Psoas muscle (tissue), 8 donors: ENCODE measurements at regions of chr11 and their contacts with region 1.

Region 1: DNA sequence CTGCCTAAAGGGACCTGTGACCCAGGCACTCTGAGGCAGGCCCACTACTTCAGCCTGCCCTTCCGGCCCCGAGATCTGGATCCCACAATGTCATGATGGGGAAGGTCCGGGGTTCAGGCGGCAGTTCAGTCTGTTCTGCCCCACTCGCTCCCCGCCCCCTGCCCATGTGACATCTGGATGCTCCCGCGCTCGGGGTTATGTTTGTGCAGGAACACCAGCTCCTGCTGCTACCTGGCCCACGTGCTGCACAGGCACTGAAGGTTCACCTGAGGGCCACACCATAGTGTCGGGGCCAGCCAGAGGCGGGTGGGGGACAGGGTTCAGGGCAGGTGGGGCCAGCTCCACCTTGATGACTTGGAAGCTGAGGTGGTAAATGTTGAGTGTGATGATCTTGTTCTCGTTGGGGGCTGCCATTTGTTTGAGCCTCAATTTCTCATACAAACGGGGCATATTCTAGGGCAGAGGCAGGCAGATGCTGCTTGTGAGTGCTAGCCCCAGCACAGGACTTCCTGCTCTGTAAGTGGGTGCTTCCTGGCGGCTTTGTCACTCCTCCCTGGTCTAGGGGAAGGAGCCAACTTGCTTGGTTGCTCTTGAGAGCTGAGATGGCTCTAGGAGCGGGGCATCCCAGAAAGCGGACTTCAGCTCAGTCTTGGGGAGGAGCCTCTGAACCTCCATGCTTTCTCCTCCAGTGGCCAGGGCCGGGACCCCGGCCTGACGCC is 4.4 kb upstream of the SIPA1 start:
- DNase-seq: no peak
- ATAC-seq: no peak
- H3K4me3 ChIP-seq: no peak overlapping the region
- H3K27ac ChIP-seq: no peak overlapping the region
- H3K4me1 ChIP-seq: peaks cover 8% of the 10 kb centered on the region
- H3K27me3 ChIP-seq: no peaks in the 10 kb centered on the region
- CTCF ChIP-seq: no peak

Region 2: GRCh38 chr11:65720237-65720934 is 86.8 kb after region 1 on chr11 and contains the start of gene RNASEH2C:
- intact Hi-C with region 1: no loop called
- DNase-seq: peak; percentile 86 to 93
- ATAC-seq: peak; percentile 91 to 96 (median 94)
- H3K4me3 ChIP-seq: peak within 1 kb of the TSS; percentile 95
- H3K27ac ChIP-seq: peak within 1 kb of the TSS; percentile 83
- H3K4me1 ChIP-seq: peaks cover 15% of the 10 kb centered on the region
- H3K27me3 ChIP-seq: no peaks in the 10 kb centered on the region
- CTCF ChIP-seq: no peak
- total RNA-seq, gene RNASEH2C: 17.5 to 38.4 (median 28.1) TPM

Region 3: GRCh38 chr11:65766535-65766934 is 133.0 kb after region 1 on chr11:
- intact Hi-C with region 1: loop called in 1 of 2 experiments (anchors 2 kb)
- DNase-seq: no peak
- ATAC-seq: no peak
- H3K4me3 ChIP-seq: no peak overlapping the region
- H3K27ac ChIP-seq: no peak overlapping the region
- H3K4me1 ChIP-seq: no peaks in the 10 kb centered on the region
- H3K27me3 ChIP-seq: no peaks in the 10 kb centered on the region
- CTCF ChIP-seq: no peak